ENCODE measurements at regions of chr19 and their contacts with region 1.

Region 1: GRCh38 chr19:13150187-13150930 is at the starts of genes IER2 and STX10:
- H3K4me3 ChIP-seq: peak within 1 kb of the TSS; percentile 83
- H3K27ac ChIP-seq: peak within 1 kb of the TSS; percentile 86
- H3K4me1 ChIP-seq: peaks cover 8% of the 10 kb centered on the region
- CTCF ChIP-seq: peak; percentile 94

Region 2: DNA sequence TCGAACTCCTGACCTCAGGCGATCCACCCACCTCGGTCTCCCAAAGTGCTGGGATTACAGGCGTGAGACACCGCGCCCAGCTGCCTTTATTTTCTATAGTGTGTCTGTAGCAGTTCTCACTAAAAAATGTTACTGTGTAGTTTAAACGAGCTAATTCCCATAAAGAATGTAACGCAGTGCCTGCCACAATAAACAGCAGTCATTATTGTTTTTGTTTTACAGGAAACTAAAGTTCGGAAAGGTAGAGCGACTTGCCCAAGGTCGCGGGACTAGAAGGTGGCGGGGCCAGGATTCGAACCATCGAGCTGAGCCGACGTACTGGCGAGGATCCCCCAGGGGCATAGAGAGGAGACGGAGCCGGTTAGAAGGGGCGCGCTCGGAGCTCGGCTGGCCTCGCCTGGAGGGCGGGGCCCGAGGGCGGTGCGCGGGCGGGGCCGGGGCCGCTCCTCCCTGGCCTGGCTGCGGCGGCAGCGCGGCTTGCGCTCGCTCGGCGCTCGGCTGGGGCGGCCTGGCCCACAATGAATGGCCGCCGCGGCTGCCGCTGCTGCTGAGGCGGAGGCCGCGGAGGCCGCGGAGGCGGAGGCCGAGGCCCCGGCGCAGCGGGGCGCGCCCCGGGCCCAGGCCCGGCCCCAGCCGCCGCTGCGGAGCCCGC is 32.5 kb before region 1 on chr19 and contains the start of gene NACC1:
- CTCF ChIA-PET with region 1: interaction called, 3 read pairs
- POLR2A ChIA-PET with region 1: interaction called, 48 read pairs
- H3K4me3 ChIP-seq: peak within 1 kb of the TSS; percentile 93
- H3K27ac ChIP-seq: peak within 1 kb of the TSS; percentile 98
- H3K4me1 ChIP-seq: peaks cover 7% of the 10 kb centered on the region
- CTCF ChIP-seq: no peak; the same call in 1 of the 2 replicates

Region 3: DNA sequence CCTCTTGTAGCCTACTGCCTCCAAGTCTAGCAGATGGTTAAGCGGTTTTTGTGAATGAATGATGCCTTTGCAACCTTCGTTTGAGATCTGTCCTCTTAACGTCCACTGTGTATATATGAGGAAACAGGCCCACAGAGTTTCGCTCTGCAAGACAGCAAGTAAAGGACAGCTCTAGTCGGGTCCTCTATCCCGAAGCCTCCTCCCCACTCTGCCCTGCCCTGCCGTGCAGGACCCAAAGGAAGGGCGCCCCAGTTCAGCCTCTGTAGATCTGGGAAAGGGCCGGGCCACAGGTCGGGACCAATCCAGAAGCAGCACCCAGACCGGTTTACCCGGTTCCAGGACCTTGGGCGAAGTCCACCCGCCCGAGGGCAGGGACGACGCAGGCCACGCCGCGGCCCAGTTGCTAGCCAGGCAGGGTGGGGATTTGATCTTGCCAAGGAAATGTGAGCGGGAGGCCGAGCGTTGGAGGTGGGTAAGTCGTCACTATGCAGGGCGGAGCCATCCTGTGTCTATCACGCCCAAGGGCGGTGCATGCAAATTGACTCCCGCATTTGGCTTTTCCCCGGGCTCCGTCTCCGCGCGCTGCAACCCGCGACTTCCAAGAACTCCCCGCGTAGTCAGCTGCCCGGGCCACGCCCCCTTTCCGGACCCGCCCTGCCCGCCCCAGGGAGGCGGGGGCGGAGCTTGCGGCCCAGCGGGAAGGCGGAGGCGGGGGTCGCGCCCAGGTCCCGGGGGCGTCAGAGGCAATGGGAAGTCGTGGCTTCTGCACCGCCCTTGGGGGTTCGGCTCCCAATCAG is 12.4 kb after region 1 on chr19:
- CTCF ChIA-PET with region 1: interaction called, 3 read pairs
- POLR2A ChIA-PET with region 1: interaction called, 89 read pairs
- H3K4me3 ChIP-seq: peak overlapping the region; percentile 20
- H3K27ac ChIP-seq: peak overlapping the region; percentile 72
- H3K4me1 ChIP-seq: peaks cover 17% of the 10 kb centered on the region
- CTCF ChIP-seq: no peak

Region 4: DNA sequence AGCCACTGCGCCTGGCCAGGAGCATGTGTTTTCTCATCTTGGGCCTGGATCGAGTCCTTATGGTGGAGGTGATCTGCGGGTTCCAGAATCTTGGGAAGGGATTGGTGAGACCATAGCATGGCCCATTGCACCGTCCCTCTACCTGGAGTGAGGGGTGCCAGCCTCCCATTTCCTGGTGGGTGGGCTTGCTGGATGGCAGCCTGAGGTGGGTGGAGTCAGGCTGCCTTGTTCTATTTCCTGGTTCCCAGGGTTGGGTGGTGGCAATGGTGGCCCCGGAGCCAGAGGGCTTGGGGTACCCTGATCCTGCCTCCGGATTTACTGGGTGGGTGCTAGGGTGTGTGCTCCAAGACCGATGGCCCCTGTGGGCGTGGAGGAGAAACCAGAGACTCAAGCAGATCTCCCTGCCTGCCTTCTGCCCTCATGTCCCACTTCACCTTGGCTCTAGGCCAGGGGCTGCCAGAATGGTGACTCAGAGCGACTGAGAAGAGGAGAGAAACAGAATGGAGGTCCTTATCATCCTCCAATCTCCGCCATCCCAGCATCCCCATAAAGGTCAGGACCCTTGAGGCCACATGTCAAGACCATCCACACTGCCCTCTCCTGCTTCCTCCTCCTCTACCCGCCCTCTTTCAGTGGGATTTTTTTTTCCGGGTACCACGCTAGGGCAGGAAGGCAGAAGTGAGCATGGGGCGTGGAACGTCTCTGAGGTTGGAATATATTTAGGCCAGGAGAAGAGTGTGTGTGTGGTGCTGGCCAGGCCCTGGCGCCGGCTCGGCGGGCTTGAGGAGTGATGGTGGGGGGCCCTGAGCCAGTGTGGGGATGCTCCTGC is 21.9 kb after region 1 on chr19:
- CTCF ChIA-PET with region 1: interaction called, 3 read pairs
- POLR2A ChIA-PET with region 1: interaction called, 63 read pairs
- H3K4me3 ChIP-seq: no peak overlapping the region
- H3K27ac ChIP-seq: no peak overlapping the region; the same call in 1 of the 2 replicates
- H3K4me1 ChIP-seq: peaks cover 9% of the 10 kb centered on the region
- CTCF ChIP-seq: no peak

Region 5: GRCh38 chr19:13181747-13182388 is 31.5 kb after region 1 on chr19:
- CTCF ChIA-PET with region 1: no interaction called
- POLR2A ChIA-PET with region 1: interaction called, 18 read pairs
- H3K4me3 ChIP-seq: no peak overlapping the region
- H3K27ac ChIP-seq: peak overlapping the region; percentile 17
- H3K4me1 ChIP-seq: no peaks in the 10 kb centered on the region; the same call in 1 of the 2 replicates
- CTCF ChIP-seq: no peak

Region 6: DNA sequence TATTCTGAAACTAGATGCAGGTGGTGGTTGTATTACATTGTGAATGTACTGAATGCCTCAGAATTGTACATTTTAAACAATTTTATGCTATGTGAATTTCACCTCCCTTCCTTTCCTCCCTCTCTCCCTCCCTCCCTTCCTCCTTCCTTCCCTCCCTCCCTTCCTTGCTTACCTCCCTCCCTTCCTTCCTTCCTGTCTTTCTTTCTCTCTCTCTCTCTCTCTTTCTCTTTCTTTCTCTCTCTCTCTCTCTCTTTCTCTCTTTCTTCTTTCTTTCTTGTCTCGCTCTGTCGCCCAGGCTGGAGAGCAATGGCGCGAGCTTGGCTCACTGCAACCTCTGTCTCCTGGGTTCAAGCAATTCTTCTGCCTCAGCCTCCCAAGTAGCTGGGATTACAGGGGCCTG is 37.1 kb after region 1 on chr19:
- CTCF ChIA-PET with region 1: no interaction called
- POLR2A ChIA-PET with region 1: interaction called, 18 read pairs
- H3K4me3 ChIP-seq: no peak overlapping the region
- H3K27ac ChIP-seq: no peak overlapping the region
- H3K4me1 ChIP-seq: no peaks in the 10 kb centered on the region
- CTCF ChIP-seq: no peak

Region 7: GRCh38 chr19:13195678-13196077 is 45.3 kb after region 1 on chr19:
- CTCF ChIA-PET with region 1: interaction called, 7 read pairs
- POLR2A ChIA-PET with region 1: interaction called, 11 read pairs
- H3K4me3 ChIP-seq: no peak overlapping the region
- H3K27ac ChIP-seq: no peak overlapping the region
- H3K4me1 ChIP-seq: no peaks in the 10 kb centered on the region
- CTCF ChIP-seq: no peak

Region 8: DNA sequence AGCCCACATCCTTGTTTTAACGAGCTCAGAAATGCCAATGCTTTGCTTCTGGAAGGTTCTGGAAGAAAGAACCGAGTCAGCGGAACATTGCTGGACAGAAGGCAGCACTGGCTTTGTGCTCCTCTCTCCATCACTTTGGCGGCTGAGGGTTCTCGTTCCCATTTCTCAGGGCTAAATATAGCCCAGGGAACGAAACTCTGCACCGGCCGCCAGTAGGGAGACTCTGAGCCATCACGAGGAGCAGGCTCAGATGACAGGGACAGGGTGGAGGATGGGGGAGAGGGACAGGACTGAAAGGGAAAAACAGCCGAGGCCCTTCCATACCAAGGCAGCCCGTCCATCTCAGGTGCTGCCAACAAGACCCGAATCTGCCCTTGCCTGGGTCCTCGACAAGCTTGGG is 189.5 kb after region 1 on chr19:
- CTCF ChIA-PET with region 1: no interaction called
- POLR2A ChIA-PET with region 1: no interaction called
- H3K4me3 ChIP-seq: no peak overlapping the region
- H3K27ac ChIP-seq: no peak overlapping the region
- H3K4me1 ChIP-seq: no peaks in the 10 kb centered on the region
- CTCF ChIP-seq: no peak

Region 9: GRCh38 chr19:13463296-13463695 is 312.9 kb after region 1 on chr19:
- CTCF ChIA-PET with region 1: no interaction called
- POLR2A ChIA-PET with region 1: no interaction called
- H3K4me3 ChIP-seq: no peak overlapping the region
- H3K27ac ChIP-seq: no peak overlapping the region
- H3K4me1 ChIP-seq: no peaks in the 10 kb centered on the region
- CTCF ChIP-seq: no peak

Measured in HEK293 (cell line).